Calu3 (cell line): ENCODE measurements at regions of chr1 and their contacts with region 1.

Region 1: GRCh38 chr1:21659099-21659923 is 9.8 kb downstream of the RAP1GAP start:
- DNase-seq: peak; percentile 80
- H3K4me3 Mint-ChIP-seq: peak overlapping the region; percentile 56
- H3K27ac Mint-ChIP-seq: no peak overlapping the region
- H3K4me1 Mint-ChIP-seq: peaks cover 7% of the 10 kb centered on the region
- H3K27me3 Mint-ChIP-seq: peaks cover 19% of the 10 kb centered on the region
- CTCF ChIP-seq: peak; percentile 86

Region 2: DNA sequence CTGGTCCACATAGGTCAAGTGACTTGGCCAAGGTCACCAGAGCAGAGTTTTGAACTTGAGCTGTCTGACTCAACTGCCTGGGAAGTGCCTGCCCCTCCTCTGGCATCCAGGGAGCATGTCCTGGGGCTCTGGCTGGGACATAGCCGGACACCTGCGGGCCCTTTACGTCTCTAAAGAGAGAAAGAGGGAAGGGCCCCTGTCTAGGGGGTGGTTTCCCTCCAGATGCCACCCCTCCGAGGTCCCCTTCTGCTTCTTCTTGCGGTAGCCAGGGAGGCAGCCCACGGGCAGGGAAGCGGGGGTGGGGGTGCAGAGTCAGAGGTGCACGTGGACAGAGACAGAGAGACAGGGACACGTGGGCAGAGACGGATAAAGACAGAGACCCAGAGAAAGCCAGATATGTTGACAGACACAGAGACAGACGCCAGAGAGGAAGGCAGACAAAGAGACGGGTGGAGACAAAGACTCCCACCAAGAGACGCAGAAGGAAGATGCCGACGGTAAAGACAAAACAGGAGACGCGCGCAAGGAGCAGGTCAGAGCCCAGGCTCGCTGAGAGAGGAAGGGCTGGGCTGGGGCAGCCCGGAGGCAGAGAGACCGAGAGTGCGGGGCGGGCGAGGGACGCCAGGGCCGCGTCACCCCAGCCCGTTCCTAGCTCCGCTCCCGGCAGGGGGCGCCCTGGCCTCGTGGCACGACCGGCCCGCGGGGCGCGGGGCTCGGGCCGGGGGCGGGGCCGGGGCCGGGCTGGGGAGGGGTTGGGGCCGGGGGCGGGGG is 150.5 kb before region 1 on chr1:
- CTCF ChIA-PET with region 1: no interaction called
- intact Hi-C with region 1: loop called (anchors 10 kb)
- DNase-seq: peak; percentile 79
- H3K4me3 Mint-ChIP-seq: peak overlapping the region; percentile 64
- H3K27ac Mint-ChIP-seq: peak overlapping the region; percentile 10
- H3K4me1 Mint-ChIP-seq: peaks cover 9% of the 10 kb centered on the region
- H3K27me3 Mint-ChIP-seq: peaks cover 57% of the 10 kb centered on the region
- CTCF ChIP-seq: peak; percentile 65

Region 3: GRCh38 chr1:21594935-21595897 is 64.1 kb before region 1 on chr1:
- CTCF ChIA-PET with region 1: no interaction called
- intact Hi-C with region 1: loop called (anchors 5 kb)
- DNase-seq: peak; percentile 40
- H3K4me3 Mint-ChIP-seq: no peak overlapping the region
- H3K27ac Mint-ChIP-seq: peak overlapping the region; percentile 79
- H3K4me1 Mint-ChIP-seq: peaks cover 6% of the 10 kb centered on the region
- H3K27me3 Mint-ChIP-seq: peaks cover 19% of the 10 kb centered on the region
- CTCF ChIP-seq: peak; percentile 60